Endothelial cell of umbilical vein (primary cell): ENCODE measurements at regions of chr2 and their contacts with region 1.

Region 1: DNA sequence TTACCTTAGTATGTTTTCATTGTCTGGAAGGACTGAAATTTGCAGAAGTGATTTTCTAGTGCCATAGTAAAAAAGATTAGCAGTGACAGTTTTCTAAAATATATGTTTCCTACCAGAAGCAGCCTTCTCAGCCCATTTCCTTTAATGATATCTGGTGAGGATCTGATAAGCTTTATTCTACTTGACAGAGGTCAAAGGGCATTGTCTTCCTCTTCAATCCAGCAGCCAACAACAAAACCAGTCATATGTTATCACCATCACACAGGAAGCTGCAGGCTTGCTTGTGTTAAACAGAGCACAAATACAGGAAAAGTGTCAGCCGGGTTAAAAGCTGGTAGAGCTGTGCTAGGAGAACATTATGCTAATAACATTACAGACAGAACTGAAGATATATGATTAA is 35.6 kb upstream of the ZSWIM2 start:
- DNase-seq: peak; percentile 98
- H3K4me3 ChIP-seq: no peak overlapping the region
- H3K27ac ChIP-seq: peak overlapping the region; percentile 71
- H3K4me1 ChIP-seq: peaks cover 55% of the 10 kb centered on the region
- H3K27me3 ChIP-seq: no peaks in the 10 kb centered on the region
- CTCF ChIP-seq: no peak
- POLR2A ChIP-seq: peak; percentile 86

Region 2: GRCh38 chr2:186868344-186868743 is 16.2 kb before region 1 on chr2:
- CTCF ChIA-PET with region 1: interaction called, 14 read pairs
- POLR2A ChIA-PET with region 1: no interaction called
- dilution Hi-C with region 1: no loop called
- intact Hi-C with region 1: loop called (anchors 1 kb)
- DNase-seq: peak; percentile 85
- H3K4me3 ChIP-seq: no peak overlapping the region
- H3K27ac ChIP-seq: no peak overlapping the region
- H3K4me1 ChIP-seq: peaks cover 2% of the 10 kb centered on the region
- H3K27me3 ChIP-seq: no peaks in the 10 kb centered on the region
- CTCF ChIP-seq: no peak
- POLR2A ChIP-seq: no peak

Region 3: GRCh38 chr2:186977433-186978045 is 93.0 kb after region 1 on chr2:
- CTCF ChIA-PET with region 1: no interaction called
- POLR2A ChIA-PET with region 1: no interaction called
- dilution Hi-C with region 1: no loop called
- intact Hi-C with region 1: no loop called
- DNase-seq: no peak
- H3K4me3 ChIP-seq: no peak overlapping the region
- H3K27ac ChIP-seq: no peak overlapping the region
- H3K4me1 ChIP-seq: no peaks in the 10 kb centered on the region
- H3K27me3 ChIP-seq: no peaks in the 10 kb centered on the region
- CTCF ChIP-seq: no peak
- POLR2A ChIP-seq: no peak

Region 4: GRCh38 chr2:187319441-187320108 is 435.0 kb after region 1 on chr2:
- CTCF ChIA-PET with region 1: no interaction called
- POLR2A ChIA-PET with region 1: no interaction called
- dilution Hi-C with region 1: no loop called
- intact Hi-C with region 1: loop called (anchors 1 kb)
- DNase-seq: peak; percentile 96
- H3K4me3 ChIP-seq: peak overlapping the region in 1 of 3 experiments; percentile 3
- H3K27ac ChIP-seq: peak overlapping the region; percentile 94
- H3K4me1 ChIP-seq: peaks cover 47% of the 10 kb centered on the region
- H3K27me3 ChIP-seq: no peaks in the 10 kb centered on the region
- CTCF ChIP-seq: no peak
- POLR2A ChIP-seq: no peak